ENCODE measurements at regions of chr1 and their contacts with region 1.

Region 1: GRCh38 chr1:2194898-2195673 is 514 bp upstream of the FAAP20 start:
- DNase-seq: no peak
- H3K4me3 ChIP-seq: peak overlapping the region; percentile 58 to 69
- H3K27ac ChIP-seq: peak overlapping the region; percentile 93
- H3K4me1 ChIP-seq: peaks cover 69% of the 10 kb centered on the region
- H3K27me3 ChIP-seq: no peaks in the 10 kb centered on the region
- CTCF ChIP-seq: peak; percentile 95 to 99 (median 97)
- POLR2A ChIP-seq: peak in 1 of 2 donors; percentile 3

Region 2: GRCh38 chr1:2233997-2234761 is 39.1 kb after region 1 on chr1:
- intact Hi-C with region 1: loop called (anchors 5 kb)
- DNase-seq: peak in 1 of 2 donors; percentile 98
- H3K4me3 ChIP-seq: peak overlapping the region; percentile 60 to 63
- H3K27ac ChIP-seq: peak overlapping the region; percentile 96
- H3K4me1 ChIP-seq: peaks cover 99% of the 10 kb centered on the region
- H3K27me3 ChIP-seq: no peaks in the 10 kb centered on the region
- CTCF ChIP-seq: no peak
- POLR2A ChIP-seq: no peak

Region 3: DNA sequence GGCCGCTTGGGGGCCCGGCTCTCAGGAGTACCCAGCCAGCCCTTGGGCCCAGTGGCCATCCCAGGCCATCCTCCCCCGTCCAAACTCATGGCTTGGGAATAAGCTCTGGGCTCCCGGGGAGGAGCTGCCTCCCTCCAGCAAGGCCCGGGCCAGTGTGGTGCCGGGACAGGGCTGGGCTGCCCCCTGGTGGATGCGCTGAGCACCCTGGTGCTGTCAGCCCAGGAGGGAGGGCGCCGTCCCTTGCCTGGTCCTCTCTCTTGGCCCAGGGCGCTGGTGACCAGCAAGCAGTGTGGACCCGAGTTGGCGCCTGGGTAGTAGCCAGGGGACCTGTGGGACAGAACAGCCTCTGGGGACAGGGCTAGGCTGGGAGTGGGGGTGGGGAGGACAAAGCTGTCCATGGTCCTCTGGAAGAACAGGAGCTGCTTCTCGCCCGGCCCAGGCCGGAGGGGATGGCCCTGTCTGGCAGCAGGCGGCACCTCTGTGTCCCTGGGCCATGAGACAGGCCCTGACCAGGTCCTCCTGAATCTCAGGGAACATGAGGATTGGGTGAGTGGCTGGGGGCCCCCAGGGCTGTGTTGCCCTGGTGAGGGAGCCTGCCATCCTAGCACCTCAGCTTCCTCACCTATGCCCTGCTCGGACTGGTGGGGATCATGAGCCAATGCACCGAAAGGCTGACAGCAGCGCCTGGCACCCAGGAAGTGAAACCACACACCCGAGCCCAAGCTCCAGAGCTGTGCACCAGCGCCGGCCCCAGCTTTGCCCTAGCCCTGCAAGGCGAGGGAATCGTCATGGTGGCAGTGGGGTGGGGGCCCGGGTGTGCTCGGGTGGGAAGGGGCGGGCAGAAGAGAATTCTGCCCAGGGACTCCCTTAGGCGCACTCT is 186.9 kb after region 1 on chr1:
- intact Hi-C with region 1: loop called (anchors 2 kb)
- DNase-seq: no peak
- H3K4me3 ChIP-seq: no peak overlapping the region
- H3K27ac ChIP-seq: peak overlapping the region; percentile 51
- H3K4me1 ChIP-seq: peaks cover 11% of the 10 kb centered on the region
- H3K27me3 ChIP-seq: no peaks in the 10 kb centered on the region
- CTCF ChIP-seq: peak; percentile 80 to 96 (median 83)
- POLR2A ChIP-seq: no peak

Region 4: DNA sequence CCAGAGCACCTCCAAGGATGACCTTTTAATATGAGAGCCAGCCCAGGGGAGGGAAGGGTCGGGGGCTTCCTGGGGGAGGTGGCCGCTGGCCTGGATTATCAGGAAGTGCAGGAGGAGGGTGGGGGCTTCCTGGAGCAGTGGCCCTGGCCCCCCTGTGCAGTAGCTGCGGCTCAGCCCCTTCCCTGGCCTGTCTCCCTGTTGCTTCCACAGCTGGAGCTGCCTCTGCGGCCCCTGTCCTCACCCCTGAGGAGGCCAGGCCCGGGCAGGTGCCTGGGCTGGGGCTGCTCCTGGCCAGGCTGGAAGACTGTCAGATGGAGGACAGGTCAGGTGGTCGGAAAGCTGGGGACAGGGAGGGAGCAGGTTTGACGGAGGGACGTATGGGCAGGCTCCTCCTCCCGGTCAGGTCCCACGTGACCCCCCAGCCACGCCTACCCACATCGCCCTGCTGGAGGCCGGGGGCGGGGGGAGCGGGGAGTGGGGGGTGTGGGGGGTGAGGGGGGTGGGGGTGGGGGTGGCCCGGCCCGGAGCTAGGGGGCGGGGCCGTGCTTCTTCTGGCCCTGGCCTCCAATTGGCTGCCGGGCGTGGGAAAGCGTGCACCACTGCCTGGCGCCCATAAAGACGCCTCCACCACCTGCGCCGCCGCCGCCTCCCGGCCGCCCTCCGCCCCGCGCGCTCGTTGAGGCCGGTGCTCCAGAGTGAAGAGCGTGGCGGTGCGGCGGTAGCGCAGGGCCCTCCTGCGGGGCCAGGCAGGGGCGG is 350.9 kb after region 1 on chr1:
- intact Hi-C with region 1: loop called (anchors 10 kb)
- DNase-seq: peak in 1 of 2 donors; percentile 95
- H3K4me3 ChIP-seq: peak overlapping the region; percentile 47 to 53
- H3K27ac ChIP-seq: peak overlapping the region; percentile 92
- H3K4me1 ChIP-seq: peaks cover 62% of the 10 kb centered on the region
- H3K27me3 ChIP-seq: no peaks in the 10 kb centered on the region
- CTCF ChIP-seq: no peak
- POLR2A ChIP-seq: no peak

Measured in vagina (tissue), 2 donors.